GM12878 (cell line): ENCODE measurements at regions of chr14 and their contacts with region 1.

Region 1: DNA sequence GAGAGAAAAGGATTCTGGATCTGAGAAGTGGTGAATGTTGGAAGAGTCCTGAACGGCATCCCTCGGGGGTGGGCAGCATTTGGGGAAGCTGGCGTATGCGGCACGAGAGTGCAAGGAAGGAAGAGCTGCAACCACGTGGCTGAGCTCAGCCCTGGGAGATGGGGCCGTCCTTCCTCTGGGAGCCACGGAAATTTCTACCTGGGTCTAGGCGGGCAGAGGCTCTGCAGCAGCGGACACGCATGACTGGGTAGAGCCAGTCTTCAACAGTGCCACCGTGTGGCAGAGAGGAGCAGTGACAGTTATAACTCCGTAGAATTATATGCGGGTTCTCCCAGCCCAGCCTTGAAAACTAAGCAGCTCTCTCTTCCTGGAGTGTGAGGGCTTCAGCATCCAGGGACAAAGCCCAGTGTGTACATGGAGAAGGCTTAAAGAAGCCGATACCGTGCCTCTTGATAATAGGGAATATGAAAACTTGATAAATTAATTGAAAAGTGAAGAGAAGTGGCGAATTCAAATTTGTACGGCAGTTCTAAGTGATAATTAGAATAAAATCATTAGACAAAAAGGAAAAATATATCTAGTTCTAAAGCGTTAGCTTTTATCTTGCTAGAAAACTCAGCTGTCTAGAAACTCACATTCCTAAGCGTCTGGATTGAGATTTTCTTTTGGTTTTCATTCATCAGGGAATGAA is 82.9 kb upstream of the STXBP6 start:
- DNase-seq: no peak
- ATAC-seq: peak; percentile 97
- H3K4me3 ChIP-seq: no peak overlapping the region
- H3K27ac ChIP-seq: no peak overlapping the region
- H3K4me1 ChIP-seq: no peaks in the 10 kb centered on the region
- H3K27me3 ChIP-seq: no peaks in the 10 kb centered on the region
- CTCF ChIP-seq: peak; percentile 76 to 79 (median 76)
- EP300 ChIP-seq: no peak
- POLR2A ChIP-seq: no peak
- RAD21 ChIP-seq: peak; percentile 57

Region 2: DNA sequence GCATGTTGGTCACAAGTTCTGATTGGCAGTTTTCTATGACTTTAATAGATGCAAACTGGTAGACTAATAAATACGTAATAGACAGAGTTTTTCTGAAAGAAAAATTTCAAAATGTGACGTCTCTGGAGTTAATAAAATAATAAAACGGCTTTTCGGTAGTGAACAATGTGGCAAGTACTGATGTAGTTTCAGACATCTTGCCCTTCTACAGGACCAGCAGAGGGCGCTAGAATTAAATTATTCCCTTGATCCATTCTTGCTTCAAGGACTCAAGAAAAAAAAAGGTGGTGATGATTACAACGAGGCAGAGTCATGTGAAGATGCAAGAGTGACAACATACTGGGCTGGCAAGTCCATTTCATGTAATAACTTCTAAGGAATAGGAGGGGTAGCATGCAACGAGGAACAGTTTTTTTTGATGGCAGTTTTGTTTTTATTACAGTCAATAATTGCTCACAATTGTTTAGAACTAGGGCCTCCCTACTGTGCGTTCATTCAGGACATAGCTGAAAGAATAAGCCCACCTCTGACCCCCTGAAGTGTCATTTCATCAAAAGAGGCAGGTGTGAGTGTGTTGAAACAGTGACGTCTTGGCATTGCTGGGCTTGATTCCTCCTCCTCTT is 397.9 kb before region 1 on chr14:
- CTCF ChIA-PET with region 1: interaction called, 52 read pairs
- POLR2A ChIA-PET with region 1: no interaction called
- RAD21 ChIA-PET with region 1: interaction called, 7 read pairs
- SMC1A ChIA-PET with region 1: interaction called, 28 read pairs
- in situ Hi-C with region 1: loop called (anchors 10 kb)
- intact Hi-C with region 1: loop called (anchors 1 kb)
- DNase-seq: no peak
- ATAC-seq: peak; percentile 93
- H3K4me3 ChIP-seq: no peak overlapping the region
- H3K27ac ChIP-seq: no peak overlapping the region
- H3K4me1 ChIP-seq: no peaks in the 10 kb centered on the region
- H3K27me3 ChIP-seq: no peaks in the 10 kb centered on the region
- CTCF ChIP-seq: peak; percentile 58 to 68 (median 67)
- EP300 ChIP-seq: no peak
- POLR2A ChIP-seq: no peak
- RAD21 ChIP-seq: peak; percentile 53

Region 3: GRCh38 chr14:25032092-25032784 is 100.6 kb before region 1 on chr14:
- CTCF ChIA-PET with region 1: interaction called, 23 read pairs
- POLR2A ChIA-PET with region 1: no interaction called
- RAD21 ChIA-PET with region 1: interaction called, 17 read pairs
- SMC1A ChIA-PET with region 1: interaction called, 9 read pairs
- in situ Hi-C with region 1: no loop called
- intact Hi-C with region 1: loop called (anchors 5 kb)
- DNase-seq: no peak
- ATAC-seq: peak; percentile 93
- H3K4me3 ChIP-seq: no peak overlapping the region
- H3K27ac ChIP-seq: no peak overlapping the region
- H3K4me1 ChIP-seq: no peaks in the 10 kb centered on the region
- H3K27me3 ChIP-seq: no peaks in the 10 kb centered on the region
- CTCF ChIP-seq: peak; percentile 51 to 80 (median 66)
- EP300 ChIP-seq: no peak; a peak in 1 of 4 replicates
- POLR2A ChIP-seq: no peak
- RAD21 ChIP-seq: no peak

Region 4: DNA sequence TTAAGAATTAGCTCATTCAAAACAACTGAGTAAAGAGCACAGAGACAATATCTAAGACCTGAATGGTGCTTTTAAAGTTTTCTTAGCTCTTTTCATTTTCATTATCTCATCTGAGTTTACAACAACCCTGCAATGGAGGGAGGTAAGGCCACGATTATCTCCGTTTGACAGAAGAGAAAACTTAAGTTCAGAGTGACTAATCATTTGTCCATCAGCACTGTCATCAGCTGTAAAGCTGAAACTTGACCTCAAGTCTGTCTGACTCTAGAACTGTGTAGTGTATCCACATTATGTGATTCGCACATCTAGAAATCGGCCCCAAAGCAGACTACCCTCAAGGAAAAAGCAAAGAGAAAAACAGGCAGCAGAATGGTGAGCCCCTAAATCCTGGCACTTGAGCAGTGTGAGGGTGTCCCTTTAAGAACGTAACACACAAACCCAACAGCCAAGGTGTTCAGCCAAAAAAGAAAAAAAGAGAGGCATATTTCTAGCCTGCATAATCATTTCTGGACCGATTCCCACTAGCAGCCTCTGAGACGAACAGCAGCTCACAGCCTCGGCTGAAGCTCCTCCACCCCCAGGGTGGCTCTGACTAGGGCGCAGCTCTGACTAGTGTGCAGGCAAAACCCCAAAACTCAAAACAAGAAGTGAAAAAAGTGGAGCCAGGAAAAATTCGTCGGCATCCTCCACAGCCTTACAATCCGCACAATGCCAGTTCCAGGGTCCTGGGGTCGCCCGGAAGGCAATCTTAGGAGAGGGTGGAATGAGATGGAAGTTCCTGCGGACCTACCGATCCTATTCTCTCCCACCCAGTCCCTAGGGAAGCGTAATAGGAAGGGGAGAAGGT is 84.5 kb before region 1 on chr14:
- CTCF ChIA-PET with region 1: interaction called, 5 read pairs
- POLR2A ChIA-PET with region 1: no interaction called
- RAD21 ChIA-PET with region 1: interaction called, 8 read pairs
- SMC1A ChIA-PET with region 1: interaction called, 21 read pairs
- in situ Hi-C with region 1: no loop called
- intact Hi-C with region 1: no loop called
- DNase-seq: no peak
- ATAC-seq: peak; percentile 25
- H3K4me3 ChIP-seq: no peak overlapping the region
- H3K27ac ChIP-seq: no peak overlapping the region
- H3K4me1 ChIP-seq: no peaks in the 10 kb centered on the region
- H3K27me3 ChIP-seq: peaks cover 0 to 12% of the 10 kb centered on the region in 2 experiments; a peak in 1 of 4 replicates
- CTCF ChIP-seq: no peak
- EP300 ChIP-seq: no peak
- POLR2A ChIP-seq: no peak
- RAD21 ChIP-seq: no peak

Region 5: DNA sequence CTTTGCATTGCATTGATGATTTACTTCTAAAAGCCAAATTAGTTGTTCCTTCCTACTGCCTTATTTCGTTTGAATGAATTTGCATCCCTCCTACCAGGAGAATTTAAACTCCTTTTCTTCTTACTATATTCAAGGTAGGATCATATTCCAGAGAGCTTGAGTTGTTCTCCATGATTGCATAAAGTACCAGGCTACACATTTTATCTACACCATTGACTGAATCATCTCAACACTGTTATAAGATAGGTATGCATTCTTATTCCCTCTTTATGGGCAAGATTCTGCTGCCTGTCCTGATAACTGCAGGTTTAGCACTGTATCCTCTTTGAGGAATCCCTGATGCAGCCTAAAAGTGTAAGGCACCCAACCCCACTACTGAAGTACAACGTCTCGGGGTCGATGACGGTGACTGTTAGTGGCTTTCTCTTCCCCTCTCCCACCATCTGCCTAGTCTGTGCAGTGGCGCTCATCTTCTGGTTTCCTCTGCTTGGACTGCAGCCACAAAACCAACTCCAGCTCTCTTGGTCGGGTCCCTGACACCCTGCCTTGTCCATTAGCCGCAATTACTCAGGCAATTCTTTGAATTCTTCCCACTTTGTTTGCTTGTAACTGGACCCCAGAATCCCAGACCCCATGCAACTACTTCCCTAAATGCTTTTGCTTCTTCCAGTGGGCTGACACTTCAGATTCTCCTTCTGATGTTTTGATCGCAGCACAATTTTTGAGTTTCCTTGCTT is 38.5 kb before region 1 on chr14:
- CTCF ChIA-PET with region 1: interaction called, 10 read pairs
- POLR2A ChIA-PET with region 1: no interaction called
- RAD21 ChIA-PET with region 1: interaction called, 9 read pairs
- SMC1A ChIA-PET with region 1: interaction called, 15 read pairs
- in situ Hi-C with region 1: no loop called
- intact Hi-C with region 1: no loop called
- DNase-seq: no peak
- ATAC-seq: no peak
- H3K4me3 ChIP-seq: no peak overlapping the region
- H3K27ac ChIP-seq: no peak overlapping the region
- H3K4me1 ChIP-seq: no peaks in the 10 kb centered on the region
- H3K27me3 ChIP-seq: no peaks in the 10 kb centered on the region
- CTCF ChIP-seq: no peak
- EP300 ChIP-seq: no peak
- POLR2A ChIP-seq: no peak
- RAD21 ChIP-seq: no peak

Region 6: DNA sequence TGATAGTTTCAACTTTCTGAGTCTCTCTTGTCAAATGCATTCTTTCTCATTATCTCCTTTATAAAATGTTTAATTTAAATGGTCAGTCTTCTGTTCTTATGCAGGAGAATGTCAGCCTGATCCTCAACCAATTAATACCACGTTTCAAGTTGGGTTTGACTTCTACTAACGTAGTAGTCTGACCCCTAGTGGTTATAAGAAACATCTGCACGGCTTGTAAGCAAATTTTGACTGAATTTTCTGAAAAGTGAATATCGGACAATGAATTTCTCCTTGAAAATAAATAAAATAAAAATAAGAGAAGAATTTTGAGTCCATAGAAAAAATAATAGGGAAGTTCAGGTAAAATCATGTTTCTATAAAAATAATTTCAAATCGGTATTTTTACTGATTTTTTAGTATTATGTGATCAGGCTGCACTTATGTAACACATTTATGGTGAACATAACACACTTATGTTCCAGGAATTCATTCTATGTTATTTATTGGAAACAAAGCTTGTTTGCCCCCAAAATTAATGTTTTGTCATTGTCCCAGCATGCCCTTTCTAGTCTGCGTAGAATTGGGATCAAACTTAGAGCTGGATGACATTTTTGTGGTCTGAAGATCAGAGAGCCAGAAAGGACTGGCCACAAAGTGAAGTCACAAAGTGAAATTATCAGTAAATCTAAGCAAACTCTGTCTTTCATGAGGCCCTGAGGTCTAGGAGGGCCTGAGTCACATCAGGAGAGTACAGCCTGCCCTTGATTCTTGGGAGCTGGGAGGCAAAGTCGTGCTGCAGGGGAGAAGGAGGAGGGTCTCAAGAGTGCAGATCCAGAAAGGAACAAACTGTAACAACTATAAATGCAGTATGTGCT is 18.3 kb after region 1 on chr14:
- CTCF ChIA-PET with region 1: interaction called, 21 read pairs
- POLR2A ChIA-PET with region 1: no interaction called
- RAD21 ChIA-PET with region 1: interaction called, 3 read pairs
- SMC1A ChIA-PET with region 1: interaction called, 7 read pairs
- in situ Hi-C with region 1: no loop called
- intact Hi-C with region 1: no loop called
- DNase-seq: peak; percentile 1
- ATAC-seq: peak; percentile 64
- H3K4me3 ChIP-seq: no peak overlapping the region
- H3K27ac ChIP-seq: no peak overlapping the region
- H3K4me1 ChIP-seq: no peaks in the 10 kb centered on the region
- H3K27me3 ChIP-seq: no peaks in the 10 kb centered on the region
- CTCF ChIP-seq: peak; percentile 63 to 76 (median 67)
- EP300 ChIP-seq: no peak
- POLR2A ChIP-seq: no peak
- RAD21 ChIP-seq: peak; percentile 58

Region 7: GRCh38 chr14:25197885-25198284 is 65.0 kb after region 1 on chr14:
- CTCF ChIA-PET with region 1: no interaction called
- POLR2A ChIA-PET with region 1: no interaction called
- RAD21 ChIA-PET with region 1: no interaction called
- SMC1A ChIA-PET with region 1: no interaction called
- in situ Hi-C with region 1: no loop called
- intact Hi-C with region 1: no loop called
- DNase-seq: no peak
- ATAC-seq: no peak
- H3K4me3 ChIP-seq: no peak overlapping the region
- H3K27ac ChIP-seq: no peak overlapping the region
- H3K4me1 ChIP-seq: no peaks in the 10 kb centered on the region
- H3K27me3 ChIP-seq: no peaks in the 10 kb centered on the region
- CTCF ChIP-seq: no peak
- EP300 ChIP-seq: no peak
- POLR2A ChIP-seq: no peak
- RAD21 ChIP-seq: no peak

Region 8: DNA sequence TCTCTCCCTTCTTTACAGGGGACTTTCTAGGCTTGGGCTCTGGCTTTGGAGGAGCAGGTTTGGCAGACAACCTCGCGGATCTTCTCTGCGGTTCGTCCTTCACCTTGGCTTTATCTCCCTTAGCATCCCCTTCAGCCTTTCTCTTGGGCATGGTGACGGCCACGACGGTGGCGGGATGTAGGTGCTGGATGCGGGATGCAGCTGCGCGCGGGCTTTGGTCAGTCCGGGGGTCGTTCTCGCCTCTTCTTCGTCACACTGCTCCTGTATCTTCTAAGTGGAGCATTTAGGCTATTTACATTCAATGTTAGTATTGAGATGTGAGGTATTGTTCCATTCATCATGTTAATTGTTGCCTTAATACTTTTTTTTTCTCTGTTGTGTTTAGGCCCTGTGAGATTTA is 134.3 kb after region 1 on chr14:
- CTCF ChIA-PET with region 1: no interaction called
- POLR2A ChIA-PET with region 1: no interaction called
- RAD21 ChIA-PET with region 1: no interaction called
- SMC1A ChIA-PET with region 1: no interaction called
- in situ Hi-C with region 1: no loop called
- intact Hi-C with region 1: no loop called
- DNase-seq: no peak
- ATAC-seq: no peak
- H3K4me3 ChIP-seq: no peak overlapping the region
- H3K27ac ChIP-seq: no peak overlapping the region
- H3K4me1 ChIP-seq: no peaks in the 10 kb centered on the region
- H3K27me3 ChIP-seq: no peaks in the 10 kb centered on the region
- CTCF ChIP-seq: no peak
- EP300 ChIP-seq: no peak
- POLR2A ChIP-seq: no peak
- RAD21 ChIP-seq: no peak